A549 (cell line): ENCODE measurements at regions of chr17 and their contacts with region 1.

Region 1: GRCh38 chr17:28416703-28417311 is 10.8 kb upstream of the SLC46A1 start:
- DNase-seq: peak; percentile 73 to 80
- ATAC-seq: peak; percentile 92 to 99
- H3K4me3 ChIP-seq: no peak overlapping the region
- H3K27ac ChIP-seq: no peak overlapping the region
- H3K4me1 ChIP-seq: no peaks in the 10 kb centered on the region
- CTCF ChIP-seq: peak; percentile 84
- EP300 ChIP-seq: no peak
- POLR2A ChIP-seq: no peak
- RAD21 ChIP-seq: peak; percentile 68

Region 2: GRCh38 chr17:28346746-28347246 is 70.0 kb before region 1 on chr17:
- CTCF ChIA-PET with region 1: interaction called, 12 read pairs
- POLR2A ChIA-PET with region 1: no interaction called
- DNase-seq: peak in 1 of 2 experiments; percentile 48
- ATAC-seq: peak in 1 of 2 experiments; percentile 30; a peak in 2 of 6 replicates
- H3K4me3 ChIP-seq: no peak overlapping the region
- H3K27ac ChIP-seq: no peak overlapping the region
- H3K4me1 ChIP-seq: no peaks in the 10 kb centered on the region
- CTCF ChIP-seq: peak; percentile 10; the same call in 1 of the 3 replicates
- EP300 ChIP-seq: no peak
- POLR2A ChIP-seq: no peak
- RAD21 ChIP-seq: peak; percentile 27 to 37; a peak in 2 of 5 replicates

Region 3: DNA sequence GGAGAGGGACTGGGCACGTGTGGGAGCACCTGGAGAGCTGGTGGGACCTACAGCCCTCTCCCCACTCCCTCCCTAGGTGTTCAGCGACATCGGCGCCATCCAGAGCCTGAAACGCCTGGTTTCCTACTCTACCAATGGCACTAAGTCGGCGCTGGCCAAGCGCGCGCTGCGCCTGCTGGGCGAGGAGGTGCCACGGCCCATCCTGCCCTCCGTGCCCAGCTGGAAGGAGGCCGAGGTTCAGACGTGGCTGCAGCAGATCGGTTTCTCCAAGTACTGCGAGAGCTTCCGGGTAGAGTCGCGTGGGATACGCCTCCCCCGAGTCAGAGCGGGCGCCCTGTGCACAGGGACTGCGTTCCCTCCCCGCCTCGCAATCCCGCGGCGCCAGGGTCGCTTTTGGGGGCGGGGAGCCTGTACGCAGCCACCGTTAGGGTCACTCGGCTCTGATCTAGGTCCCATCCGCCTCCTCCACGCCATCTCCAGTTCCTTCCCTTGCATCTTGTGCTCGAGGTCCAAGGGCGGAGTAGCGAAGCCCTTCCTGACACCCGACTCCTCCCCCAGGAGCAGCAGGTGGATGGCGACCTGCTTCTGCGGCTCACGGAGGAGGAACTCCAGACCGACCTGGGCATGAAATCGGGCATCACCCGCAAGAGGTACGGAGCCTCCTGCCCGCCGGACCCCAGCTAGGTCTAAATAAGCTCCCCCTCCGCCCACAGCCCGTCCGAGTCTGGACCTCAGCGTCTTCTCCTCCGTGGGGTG is 32.3 kb before region 1 on chr17:
- CTCF ChIA-PET with region 1: interaction called, 11 read pairs
- POLR2A ChIA-PET with region 1: no interaction called
- DNase-seq: no peak
- ATAC-seq: no peak
- H3K4me3 ChIP-seq: no peak overlapping the region
- H3K27ac ChIP-seq: no peak overlapping the region
- H3K4me1 ChIP-seq: peaks cover 18% of the 10 kb centered on the region
- CTCF ChIP-seq: no peak
- EP300 ChIP-seq: no peak
- POLR2A ChIP-seq: no peak
- RAD21 ChIP-seq: no peak

Region 4: DNA sequence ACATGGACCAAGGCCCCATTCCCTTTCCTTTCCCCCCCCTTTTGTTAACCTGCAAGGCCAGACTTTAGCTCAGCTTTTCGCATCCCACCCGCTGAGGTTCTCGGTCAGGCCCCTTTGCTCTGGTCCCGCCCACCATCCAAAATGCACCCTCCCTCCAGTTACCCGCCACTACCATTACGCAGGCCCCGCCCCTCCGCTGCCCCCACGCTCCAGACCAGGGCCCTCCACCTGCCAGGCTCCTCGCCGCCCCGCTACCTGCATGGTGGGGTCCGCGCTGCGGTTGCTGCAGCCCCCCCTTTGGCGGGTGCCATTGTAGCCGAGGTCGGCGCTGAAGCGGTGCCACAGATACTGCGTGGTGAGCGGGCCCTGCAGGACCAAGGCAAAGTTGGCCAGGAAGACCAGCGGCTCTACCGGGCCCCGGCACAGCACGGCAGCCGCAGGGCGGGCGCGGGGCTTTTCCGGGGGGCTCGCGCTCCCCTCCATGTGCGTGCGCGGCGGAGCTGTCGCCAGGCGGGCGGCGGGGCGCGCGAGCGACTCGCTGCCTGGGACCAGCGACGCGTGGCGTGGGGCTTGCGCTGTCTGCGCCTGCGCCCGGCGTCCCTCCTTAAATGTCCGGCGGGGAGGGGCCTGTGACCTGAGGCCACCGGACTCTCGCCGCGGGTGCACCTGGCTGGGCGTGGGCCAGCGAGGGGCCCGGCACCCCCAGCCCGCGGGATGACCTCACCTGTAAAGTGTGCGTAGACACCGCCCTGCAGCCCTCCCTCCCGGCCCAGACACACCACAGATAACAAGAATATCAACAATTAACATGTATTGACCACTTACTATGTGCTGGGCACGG is 11.0 kb before region 1 on chr17 and contains the start of gene SLC46A1:
- CTCF ChIA-PET with region 1: interaction called, 53 read pairs
- POLR2A ChIA-PET with region 1: interaction called, 5 read pairs
- DNase-seq: peak; percentile 61 to 76
- ATAC-seq: peak; percentile 78 to 91
- H3K4me3 ChIP-seq: peak within 1 kb of the TSS; percentile 80
- H3K27ac ChIP-seq: peak within 1 kb of the TSS; percentile 89 to 96
- H3K4me1 ChIP-seq: peaks cover 15% of the 10 kb centered on the region
- CTCF ChIP-seq: no peak
- EP300 ChIP-seq: no peak
- POLR2A ChIP-seq: peak; percentile 86
- RAD21 ChIP-seq: no peak
- polyA plus RNA-seq, gene SLC46A1: 12.8 and 21.4 TPM in 2 replicates

Region 5: GRCh38 chr17:28449861-28450260 is 33.1 kb after region 1 on chr17:
- CTCF ChIA-PET with region 1: interaction called, 10 read pairs
- POLR2A ChIA-PET with region 1: no interaction called
- DNase-seq: no peak
- ATAC-seq: no peak
- H3K4me3 ChIP-seq: no peak overlapping the region
- H3K27ac ChIP-seq: no peak overlapping the region
- H3K4me1 ChIP-seq: no peaks in the 10 kb centered on the region
- CTCF ChIP-seq: no peak
- EP300 ChIP-seq: no peak
- POLR2A ChIP-seq: no peak
- RAD21 ChIP-seq: no peak